PC-3 (cell line): ENCODE measurements at regions of chr4 and their contacts with region 1.

Region 1: DNA sequence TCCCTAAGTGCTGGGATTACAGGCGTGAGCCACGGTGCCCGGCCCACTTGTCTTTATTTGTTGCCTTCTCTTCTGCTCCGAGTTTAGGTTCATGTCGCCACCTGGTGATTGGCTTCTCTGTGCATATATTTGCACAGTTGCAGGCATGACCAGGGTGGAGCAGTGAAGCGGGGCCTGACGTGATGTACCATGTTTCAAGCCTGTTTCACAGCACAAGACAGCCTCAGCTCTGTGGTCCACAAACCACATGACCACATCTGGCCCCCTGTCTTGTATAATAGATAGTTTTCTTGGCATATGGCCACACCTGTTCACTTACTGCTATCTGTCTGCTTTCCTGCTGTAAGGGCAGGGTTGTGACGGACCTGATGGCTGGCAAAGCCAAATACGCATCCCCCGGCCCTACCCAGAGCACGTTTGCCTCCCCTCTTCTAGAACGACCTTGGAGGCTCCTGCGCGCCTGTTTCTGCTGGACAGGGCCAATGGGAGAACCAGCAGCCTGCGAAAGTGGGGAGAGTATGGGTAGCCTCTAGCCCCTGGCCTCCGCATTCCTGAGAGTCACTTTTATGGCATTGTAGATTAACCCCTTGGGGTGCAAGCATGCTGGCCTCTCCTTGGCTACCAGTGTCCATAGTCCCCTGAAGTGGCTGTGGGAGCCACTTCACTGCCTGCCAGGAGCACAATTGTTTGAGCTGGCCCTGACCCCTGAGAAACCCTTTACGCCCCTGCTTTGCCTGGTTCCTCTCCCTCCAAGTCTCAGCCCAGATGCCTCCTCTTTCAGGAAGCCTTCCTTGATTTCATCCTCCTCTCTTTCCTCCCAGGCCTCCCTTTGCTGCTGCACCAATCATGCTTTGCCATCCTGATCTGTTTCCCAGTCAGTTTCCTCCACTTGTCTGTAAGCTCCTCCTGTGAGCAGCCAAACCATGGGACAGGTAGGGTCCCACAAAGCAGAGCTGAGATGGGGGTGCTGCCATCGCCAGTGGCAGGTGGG is 6.0 kb upstream of the SH3TC1 start:
- DNase-seq: peak; percentile 69
- ATAC-seq: peak; percentile 65
- H3K4me3 ChIP-seq: no peak overlapping the region
- H3K27ac ChIP-seq: no peak overlapping the region
- H3K4me1 ChIP-seq: peaks cover 27% of the 10 kb centered on the region
- H3K27me3 ChIP-seq: no peaks in the 10 kb centered on the region
- CTCF ChIP-seq: peak; percentile 54

Region 2: DNA sequence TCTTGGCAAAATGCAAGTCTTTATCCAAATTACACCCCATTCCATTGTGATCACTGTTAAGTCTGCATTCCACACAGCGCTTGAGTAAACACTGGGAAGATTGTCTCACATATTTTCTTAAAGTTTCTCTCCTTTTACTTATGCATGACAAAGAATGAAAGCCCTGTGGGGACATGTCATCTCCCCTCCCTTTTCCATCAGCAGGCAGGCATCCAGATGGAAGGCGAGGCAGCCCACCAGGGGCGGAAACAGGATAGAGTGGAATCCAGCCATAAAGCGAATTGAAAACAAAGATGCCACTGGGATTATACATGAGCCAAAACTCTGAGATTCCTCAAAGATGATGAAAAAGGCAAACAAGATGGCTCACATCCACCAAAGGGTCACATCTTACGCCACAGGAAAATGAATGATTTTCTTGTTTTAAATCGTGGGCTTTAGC is 331.6 kb before region 1 on chr4:
- CTCF ChIA-PET with region 1: no interaction called
- POLR2A ChIA-PET with region 1: no interaction called
- intact Hi-C with region 1: no loop called
- DNase-seq: peak; percentile 90
- ATAC-seq: peak; percentile 82
- H3K4me3 ChIP-seq: peak overlapping the region; percentile 45
- H3K27ac ChIP-seq: peak overlapping the region; percentile 78
- H3K4me1 ChIP-seq: peaks cover 58% of the 10 kb centered on the region
- H3K27me3 ChIP-seq: no peaks in the 10 kb centered on the region
- CTCF ChIP-seq: no peak

Region 3: GRCh38 chr4:8176547-8177399 is 16.3 kb before region 1 on chr4:
- CTCF ChIA-PET with region 1: interaction called, 21 read pairs
- POLR2A ChIA-PET with region 1: no interaction called
- intact Hi-C with region 1: loop called (anchors 1 kb)
- DNase-seq: peak; percentile 59
- ATAC-seq: peak; percentile 94
- H3K4me3 ChIP-seq: no peak overlapping the region
- H3K27ac ChIP-seq: no peak overlapping the region
- H3K4me1 ChIP-seq: peaks cover 10% of the 10 kb centered on the region; the same call in 1 of the 2 replicates
- H3K27me3 ChIP-seq: no peaks in the 10 kb centered on the region
- CTCF ChIP-seq: peak; percentile 87